Activated CD4-positive, alpha-beta memory T cell treated with anti-CD3 and anti-CD28 coated beads, Interleukin-2, amount 10 ng/mL, durations not matched to agents 7 days and 5 days (primary cell): ENCODE measurements at regions of chr10 and their contacts with region 1.

Region 1: GRCh38 chr10:74244097-74244685 is 93.2 kb downstream of the ADK start:
- DNase-seq: no peak
- H3K4me3 Mint-ChIP-seq: no peak overlapping the region
- H3K27ac Mint-ChIP-seq: no peak overlapping the region
- H3K4me1 Mint-ChIP-seq: no peaks in the 10 kb centered on the region
- H3K27me3 Mint-ChIP-seq: no peaks in the 10 kb centered on the region

Region 2: DNA sequence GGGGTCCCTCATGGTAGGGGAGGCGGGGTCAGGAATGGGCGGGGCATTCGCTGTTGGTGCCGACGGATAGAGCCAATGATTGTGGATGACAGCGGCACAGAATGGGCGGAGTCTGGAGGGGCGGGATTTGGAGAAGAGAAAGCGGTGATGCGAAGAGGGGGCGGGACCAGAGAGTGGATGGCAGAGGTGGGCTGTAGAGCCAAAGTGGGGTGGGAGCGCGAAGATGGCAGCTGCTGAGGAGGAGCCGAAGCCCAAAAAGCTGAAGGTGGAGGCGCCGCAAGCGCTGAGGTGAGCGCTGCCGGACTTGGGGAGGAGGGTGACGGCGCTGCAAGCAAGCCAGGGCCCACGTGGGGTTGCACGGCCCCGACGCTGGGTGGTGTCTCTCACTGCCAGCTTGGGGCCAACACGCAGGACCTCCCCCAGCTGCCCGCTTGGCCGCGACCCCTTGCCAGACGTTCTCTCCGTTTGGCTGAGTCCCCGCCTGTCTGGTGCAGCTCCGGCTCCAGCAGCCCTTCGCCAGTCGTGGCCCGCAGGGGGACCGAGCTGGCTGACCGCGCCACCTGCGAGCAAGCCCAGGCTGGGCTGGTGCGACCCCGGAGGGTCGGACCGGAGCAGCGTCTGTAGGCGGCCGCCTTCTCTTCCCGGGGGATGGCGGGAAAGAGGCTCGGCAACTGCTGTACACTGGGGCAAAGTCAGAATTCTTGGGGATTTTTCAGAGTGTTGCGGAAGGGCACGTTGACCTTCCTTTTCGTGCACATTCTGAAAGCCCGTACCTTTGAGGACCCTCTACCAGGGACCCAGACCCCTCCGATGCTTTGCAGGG is 92.9 kb before region 1 on chr10 and contains the start of gene ADK:
- CTCF ChIA-PET with region 1: interaction called, 11 read pairs
- POLR2A ChIA-PET with region 1: no interaction called
- DNase-seq: peak; percentile 100
- H3K4me3 Mint-ChIP-seq: no peak within 1 kb of the TSS
- H3K27ac Mint-ChIP-seq: peak within 1 kb of the TSS; percentile 48
- H3K4me1 Mint-ChIP-seq: peaks cover 38% of the 10 kb centered on the region
- H3K27me3 Mint-ChIP-seq: no peaks in the 10 kb centered on the region
- total RNA-seq, gene ADK: 29.3 to 31.8 TPM

Region 3: DNA sequence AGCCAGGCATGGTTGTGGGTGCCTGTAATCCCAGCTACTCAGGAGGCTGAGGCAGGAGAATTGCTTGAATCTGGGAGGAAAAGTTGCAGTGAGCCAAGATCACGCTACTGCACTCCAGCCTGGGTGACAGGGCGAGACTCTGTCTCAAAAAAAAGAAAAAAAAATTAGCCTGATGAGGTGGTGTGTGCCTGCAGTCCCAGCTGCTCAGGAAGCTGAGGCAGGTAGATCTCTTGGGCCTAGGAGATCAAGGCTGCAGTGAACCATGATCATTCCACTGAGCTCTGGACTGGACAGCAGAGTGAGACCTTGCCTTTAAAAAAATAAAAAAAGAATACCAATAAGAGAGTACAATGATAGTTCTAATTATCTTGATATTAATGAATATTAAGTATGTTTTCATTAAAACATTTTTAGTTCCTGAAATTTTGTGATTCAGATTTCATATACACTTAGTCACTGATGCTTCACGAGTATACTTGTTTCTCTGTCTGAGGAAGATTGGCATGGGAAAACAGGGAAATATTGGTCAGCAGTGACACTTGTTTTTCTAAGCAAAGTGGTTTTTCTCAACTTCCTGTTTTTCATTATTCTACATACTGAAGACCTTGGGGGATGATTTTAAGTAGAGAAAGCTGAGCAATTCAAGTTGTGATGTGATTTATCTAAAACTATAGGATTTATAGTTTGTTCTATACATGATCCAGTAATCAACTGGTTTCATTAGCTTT is 16.3 kb before region 1 on chr10:
- CTCF ChIA-PET with region 1: interaction called, 10 read pairs
- POLR2A ChIA-PET with region 1: no interaction called
- DNase-seq: no peak
- H3K4me3 Mint-ChIP-seq: peak overlapping the region; percentile 45
- H3K27ac Mint-ChIP-seq: peak overlapping the region; percentile 89
- H3K4me1 Mint-ChIP-seq: peaks cover 41% of the 10 kb centered on the region
- H3K27me3 Mint-ChIP-seq: no peaks in the 10 kb centered on the region

Region 4: DNA sequence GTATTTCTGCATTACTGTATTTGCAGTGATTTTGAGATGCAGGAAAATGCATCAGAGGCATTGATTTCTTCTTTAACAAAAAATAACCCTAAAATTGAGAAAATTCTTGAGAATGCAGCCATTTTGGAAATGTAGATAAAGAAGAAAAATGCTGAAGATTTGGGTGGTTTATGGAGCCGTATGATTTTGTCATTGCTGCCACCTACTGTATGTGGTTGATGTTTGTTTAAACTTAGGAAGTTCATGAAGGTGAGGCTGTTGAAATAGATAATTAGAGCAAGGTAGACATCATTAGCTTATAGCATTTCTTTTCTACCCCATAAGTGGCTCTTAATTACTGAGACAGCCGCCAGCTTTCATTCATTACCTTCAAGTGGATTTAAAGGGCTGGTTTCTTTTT is 775.2 kb after region 1 on chr10:
- CTCF ChIA-PET with region 1: interaction called, 18 read pairs
- POLR2A ChIA-PET with region 1: no interaction called
- DNase-seq: no peak
- H3K4me3 Mint-ChIP-seq: no peak overlapping the region
- H3K27ac Mint-ChIP-seq: no peak overlapping the region
- H3K4me1 Mint-ChIP-seq: peaks cover 26% of the 10 kb centered on the region
- H3K27me3 Mint-ChIP-seq: no peaks in the 10 kb centered on the region

Region 5: DNA sequence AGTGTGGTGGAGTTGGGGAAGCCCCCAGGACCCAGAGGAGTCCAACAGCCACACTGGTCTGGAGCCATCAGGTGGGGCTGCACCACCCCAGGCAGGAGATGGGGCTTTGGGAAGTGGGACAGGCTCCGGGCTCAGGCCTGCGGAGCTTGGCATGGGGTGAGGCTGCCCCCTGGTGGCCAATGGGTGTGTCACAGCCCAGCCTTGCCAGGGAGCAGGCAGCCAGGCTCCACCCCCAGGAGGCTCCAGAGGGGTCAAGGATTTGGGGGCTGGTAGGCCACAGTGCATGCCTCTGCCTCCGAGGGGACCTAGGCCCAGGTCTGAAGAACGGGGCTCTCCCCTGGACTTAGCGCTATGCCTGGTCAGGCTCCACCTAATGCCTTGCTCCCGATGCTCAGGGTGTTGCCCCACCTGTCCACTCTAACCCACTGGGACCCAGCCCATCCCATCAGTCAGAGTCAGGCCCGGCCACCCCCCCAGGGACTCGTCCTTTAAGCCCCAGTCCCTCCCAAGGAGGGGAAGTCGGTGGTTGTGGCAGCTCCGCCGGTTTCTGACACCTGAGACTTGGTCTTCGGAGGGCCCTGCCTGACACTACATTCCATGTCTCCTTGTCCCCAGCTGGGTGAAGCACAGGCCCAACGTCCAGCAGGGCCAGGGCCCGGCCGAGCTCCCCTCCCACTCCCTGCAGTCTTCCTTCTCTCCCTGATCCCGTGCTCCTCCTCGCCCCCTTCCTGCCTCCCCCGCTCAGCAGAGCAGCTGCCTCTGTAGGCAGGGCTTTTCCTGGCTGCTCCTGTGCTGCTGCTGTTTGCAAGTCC is 856.0 kb after region 1 on chr10:
- CTCF ChIA-PET with region 1: interaction called, 12 read pairs
- POLR2A ChIA-PET with region 1: no interaction called
- DNase-seq: peak; percentile 83
- H3K4me3 Mint-ChIP-seq: no peak overlapping the region
- H3K27ac Mint-ChIP-seq: no peak overlapping the region
- H3K4me1 Mint-ChIP-seq: no peaks in the 10 kb centered on the region
- H3K27me3 Mint-ChIP-seq: no peaks in the 10 kb centered on the region